ENCODE measurements at regions of chr15 and their contacts with region 1.

Region 1: DNA sequence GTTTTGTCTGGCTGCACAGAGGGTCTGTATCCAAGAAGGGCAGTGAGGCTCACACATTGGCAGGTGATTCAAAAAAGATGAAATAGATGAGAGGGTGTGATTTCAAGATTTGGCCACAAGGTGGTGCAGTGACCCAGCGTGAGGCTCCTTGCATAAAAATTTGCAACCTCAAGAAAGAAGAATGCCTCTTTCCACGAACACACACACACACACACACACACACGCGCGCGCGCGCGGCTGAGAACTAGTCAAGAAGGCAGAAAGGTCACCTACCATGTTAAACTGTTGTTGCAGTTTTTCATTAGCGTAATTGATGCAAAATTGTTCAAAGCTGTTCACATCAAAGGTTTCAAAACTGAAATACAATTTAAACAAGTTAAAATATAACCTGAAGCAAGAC is 39.2 kb downstream of the MYO5C start:
- DNase-seq: peak; percentile 48 to 80
- H3K4me3 ChIP-seq: no peak overlapping the region
- H3K4me1 ChIP-seq: peaks cover 11% of the 10 kb centered on the region
- H3K27me3 ChIP-seq: no peaks in the 10 kb centered on the region

Region 2: GRCh38 chr15:51874751-51875528 is 381.4 kb before region 1 on chr15:
- in situ Hi-C with region 1: no loop called
- DNase-seq: no peak
- H3K4me3 ChIP-seq: no peak overlapping the region
- H3K4me1 ChIP-seq: no peaks in the 10 kb centered on the region
- H3K27me3 ChIP-seq: no peaks in the 10 kb centered on the region

Region 3: DNA sequence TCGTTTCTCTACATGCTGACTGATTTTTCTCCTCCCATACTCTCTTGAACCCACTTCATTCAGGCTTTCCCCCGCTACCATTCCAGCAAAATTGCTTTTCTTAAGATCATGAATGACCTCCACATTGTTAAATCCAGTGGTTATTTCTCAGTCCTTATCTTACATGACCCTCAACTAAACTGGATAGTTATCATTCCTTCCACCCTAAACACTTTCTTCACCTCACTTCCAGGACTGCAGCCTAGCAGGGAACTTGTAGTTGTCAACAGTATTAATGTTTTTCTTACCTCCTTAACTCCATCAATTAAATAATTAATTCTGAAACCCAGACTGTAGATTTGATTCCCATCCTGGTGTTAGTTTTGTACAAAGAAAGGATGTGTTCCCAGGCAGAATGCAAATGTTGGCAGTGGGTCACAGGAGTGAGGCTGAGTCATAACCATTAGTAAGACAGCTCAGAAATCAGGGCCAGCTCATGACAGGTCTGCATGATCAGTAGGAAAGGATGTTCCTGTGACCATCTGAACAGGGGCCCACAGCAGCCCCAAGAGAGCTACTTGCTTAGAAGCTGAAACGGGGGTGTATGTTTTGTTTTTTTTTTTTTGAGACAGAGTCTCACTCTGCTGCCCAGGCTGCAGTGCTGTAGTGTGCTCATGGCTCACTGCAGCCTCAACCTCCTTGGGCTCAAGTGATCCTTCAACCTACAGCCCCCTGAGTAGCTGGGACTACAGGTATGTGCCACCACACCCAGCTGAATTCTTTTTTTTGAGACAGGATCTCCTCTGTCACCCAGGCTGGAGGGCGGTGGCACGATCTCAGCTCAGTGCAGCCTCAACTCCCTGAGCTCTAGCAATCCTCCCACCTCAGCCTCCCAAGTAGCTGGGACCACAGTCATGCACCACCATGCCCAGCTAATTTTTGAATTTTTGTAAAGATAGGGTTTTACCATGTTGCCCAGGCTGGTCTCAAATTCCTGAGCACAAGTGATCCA is 152.9 kb before region 1 on chr15:
- in situ Hi-C with region 1: no loop called
- DNase-seq: no peak
- H3K4me3 ChIP-seq: no peak overlapping the region
- H3K4me1 ChIP-seq: peaks cover 3% of the 10 kb centered on the region; the same call in 1 of the 2 replicates
- H3K27me3 ChIP-seq: no peaks in the 10 kb centered on the region

Region 4: DNA sequence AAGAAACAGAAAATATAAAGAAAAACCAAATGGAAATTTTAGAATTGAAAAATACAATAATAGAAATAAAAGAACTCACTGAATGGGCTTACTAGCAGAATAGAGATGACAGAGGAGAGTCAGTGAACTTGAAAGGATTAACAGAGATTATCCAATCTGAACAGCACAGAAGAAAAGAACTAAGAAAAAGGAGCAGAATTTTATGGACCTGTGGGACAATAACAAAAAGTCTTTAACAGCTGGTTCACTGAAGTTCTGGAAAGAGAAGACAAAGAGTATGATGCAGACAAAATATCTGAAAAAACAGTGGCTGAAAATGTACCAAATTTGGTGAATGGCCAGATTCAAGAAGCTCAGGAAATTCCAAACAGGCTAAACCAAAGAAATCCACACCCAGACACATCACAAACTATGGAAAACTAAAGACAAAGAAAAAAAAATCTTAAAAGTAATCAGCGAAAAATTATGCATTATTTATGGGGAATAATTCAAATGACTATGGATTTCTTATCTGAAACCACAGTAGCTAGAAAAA is 55.5 kb before region 1 on chr15:
- in situ Hi-C with region 1: no loop called
- DNase-seq: peak in 1 of 2 experiments; percentile 98
- H3K4me3 ChIP-seq: no peak overlapping the region
- H3K4me1 ChIP-seq: peaks cover 8% of the 10 kb centered on the region
- H3K27me3 ChIP-seq: no peaks in the 10 kb centered on the region

Region 5: GRCh38 chr15:52636459-52636858 is 380.1 kb after region 1 on chr15:
- in situ Hi-C with region 1: no loop called
- DNase-seq: no peak
- H3K4me3 ChIP-seq: no peak overlapping the region
- H3K4me1 ChIP-seq: no peaks in the 10 kb centered on the region
- H3K27me3 ChIP-seq: no peaks in the 10 kb centered on the region

Region 6: DNA sequence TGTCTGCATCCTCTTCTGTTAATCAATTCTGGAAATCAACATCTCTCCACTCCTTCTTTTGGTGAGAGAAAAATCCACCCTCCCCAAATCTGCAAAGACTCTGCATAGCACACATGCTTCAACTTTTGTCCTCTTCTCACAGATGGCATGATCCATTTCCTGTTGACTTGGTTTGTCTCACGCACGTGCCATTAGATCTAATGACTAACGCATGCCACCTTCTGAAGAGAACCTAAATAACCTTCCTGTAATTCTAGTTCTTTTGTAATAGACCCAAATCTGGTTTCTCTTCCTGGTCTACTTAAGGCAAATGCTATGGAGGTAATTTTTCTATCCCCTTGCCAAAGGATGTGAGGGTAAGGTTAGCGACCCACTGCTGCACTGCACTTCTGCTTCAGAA is 473.8 kb after region 1 on chr15:
- in situ Hi-C with region 1: loop called (anchors 5 kb)
- DNase-seq: no peak
- H3K4me3 ChIP-seq: no peak overlapping the region
- H3K4me1 ChIP-seq: no peaks in the 10 kb centered on the region
- H3K27me3 ChIP-seq: no peaks in the 10 kb centered on the region

Measured in HAP-1 (cell line).